Left ventricle myocardium inferior (tissue), 1 donor: ENCODE measurements at regions of chr4 and their contacts with region 1.

Region 1: DNA sequence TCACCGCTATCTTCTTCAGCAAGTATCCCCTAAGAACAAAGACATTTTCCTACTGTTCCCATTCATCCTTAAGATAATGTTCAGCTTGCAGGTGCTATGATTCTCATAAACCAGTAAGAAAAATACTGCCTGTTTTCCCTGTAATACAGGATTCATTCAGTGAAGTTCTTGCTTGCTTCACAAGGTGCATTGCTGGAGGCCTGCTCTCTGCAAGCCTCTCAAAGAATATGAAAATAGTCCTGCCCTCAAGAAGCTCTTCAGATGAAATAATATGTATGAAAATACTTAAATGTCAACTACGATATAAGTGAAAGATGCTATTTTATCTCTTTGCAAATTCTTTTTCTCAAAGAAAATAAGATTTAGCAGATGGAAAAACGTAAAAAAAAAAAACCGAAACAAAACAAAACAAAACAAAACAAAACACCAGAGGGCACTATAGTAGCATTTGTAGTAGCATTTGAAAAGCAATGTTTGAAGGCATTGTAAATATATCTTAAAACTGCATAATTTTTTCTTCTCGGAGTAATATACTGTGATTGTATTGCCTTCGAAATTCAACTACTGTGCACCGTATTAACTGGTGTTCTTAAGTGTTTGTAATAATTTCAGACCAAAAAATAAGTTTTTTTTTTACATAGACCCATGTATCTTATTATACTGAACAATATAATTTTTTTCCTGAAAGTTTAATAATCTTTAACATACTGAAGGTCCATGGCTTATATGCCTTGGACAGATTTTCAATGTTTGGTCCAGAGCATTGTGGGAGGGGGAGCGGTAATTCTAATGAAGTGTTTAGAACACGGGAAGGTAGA is 26.0 kb downstream of the ADH4 start:
- DNase-seq: no peak
- H3K4me3 ChIP-seq: no peak overlapping the region
- H3K27ac ChIP-seq: no peak overlapping the region
- H3K4me1 ChIP-seq: peaks cover 4% of the 10 kb centered on the region
- H3K27me3 ChIP-seq: no peaks in the 10 kb centered on the region
- CTCF ChIP-seq: peak; percentile 57

Region 2: GRCh38 chr4:98758182-98758581 is 359.9 kb before region 1 on chr4:
- intact Hi-C with region 1: no loop called
- DNase-seq: no peak
- H3K4me3 ChIP-seq: no peak overlapping the region
- H3K27ac ChIP-seq: no peak overlapping the region
- H3K4me1 ChIP-seq: no peaks in the 10 kb centered on the region
- H3K27me3 ChIP-seq: no peaks in the 10 kb centered on the region
- CTCF ChIP-seq: no peak

Region 3: GRCh38 chr4:99043346-99043745 is 74.7 kb before region 1 on chr4:
- intact Hi-C with region 1: no loop called
- DNase-seq: no peak
- H3K4me3 ChIP-seq: no peak overlapping the region
- H3K27ac ChIP-seq: no peak overlapping the region
- H3K4me1 ChIP-seq: peaks cover 11% of the 10 kb centered on the region
- H3K27me3 ChIP-seq: no peaks in the 10 kb centered on the region
- CTCF ChIP-seq: no peak

Region 4: GRCh38 chr4:99330648-99331047 is 212.6 kb after region 1 on chr4:
- intact Hi-C with region 1: no loop called
- DNase-seq: no peak
- H3K4me3 ChIP-seq: no peak overlapping the region
- H3K27ac ChIP-seq: no peak overlapping the region
- H3K4me1 ChIP-seq: peaks cover 1% of the 10 kb centered on the region
- H3K27me3 ChIP-seq: no peaks in the 10 kb centered on the region
- CTCF ChIP-seq: no peak

Region 5: DNA sequence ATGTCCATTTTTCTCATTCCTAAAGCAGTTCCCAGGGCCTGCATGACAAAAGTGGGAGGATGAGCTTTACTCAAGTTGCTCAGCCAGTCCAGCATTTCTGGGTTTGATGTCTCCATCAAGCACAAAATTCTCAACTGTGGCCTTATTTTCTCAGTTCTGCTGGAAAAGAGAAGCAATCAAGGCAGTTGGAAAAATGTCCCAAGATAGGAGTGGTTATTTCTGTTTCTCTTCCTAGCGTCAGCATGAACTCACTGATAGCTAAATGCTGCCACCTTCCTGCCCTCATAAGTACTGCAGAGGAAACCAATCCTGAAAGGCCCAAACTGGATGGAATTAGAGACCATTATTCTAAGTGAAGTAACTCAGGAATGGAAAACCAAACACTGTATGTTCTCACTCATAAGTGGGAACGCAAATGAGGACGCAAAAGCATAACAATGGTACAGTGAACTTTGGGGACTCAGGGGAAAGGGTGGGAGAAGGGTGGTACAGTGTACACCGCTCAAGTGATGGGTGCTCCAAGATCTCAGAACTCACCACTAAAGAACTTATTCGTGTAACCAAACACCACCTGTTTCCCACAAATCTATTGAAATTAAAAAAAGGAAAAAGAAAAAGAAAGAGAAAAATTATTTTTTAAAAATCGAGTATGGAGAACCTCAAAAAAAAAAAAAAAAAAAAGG is 287.5 kb after region 1 on chr4:
- intact Hi-C with region 1: loop called (anchors 5 kb)
- DNase-seq: peak; percentile 25
- H3K4me3 ChIP-seq: no peak overlapping the region
- H3K27ac ChIP-seq: peak overlapping the region; percentile 72
- H3K4me1 ChIP-seq: peaks cover 8% of the 10 kb centered on the region
- H3K27me3 ChIP-seq: no peaks in the 10 kb centered on the region
- CTCF ChIP-seq: peak; percentile 94

Region 6: GRCh38 chr4:99462875-99463464 is 344.9 kb after region 1 on chr4:
- intact Hi-C with region 1: loop called (anchors 2 kb)
- DNase-seq: peak; percentile 15
- H3K4me3 ChIP-seq: no peak overlapping the region
- H3K27ac ChIP-seq: no peak overlapping the region
- H3K4me1 ChIP-seq: no peaks in the 10 kb centered on the region
- H3K27me3 ChIP-seq: peaks cover 53% of the 10 kb centered on the region
- CTCF ChIP-seq: peak; percentile 81